ENCODE measurements at regions of chr5 and their contacts with region 1.

Region 1: GRCh38 chr5:122192497-122193496 is 63.5 kb downstream of the ZNF474 start:
- DNase-seq: no peak

Region 2: DNA sequence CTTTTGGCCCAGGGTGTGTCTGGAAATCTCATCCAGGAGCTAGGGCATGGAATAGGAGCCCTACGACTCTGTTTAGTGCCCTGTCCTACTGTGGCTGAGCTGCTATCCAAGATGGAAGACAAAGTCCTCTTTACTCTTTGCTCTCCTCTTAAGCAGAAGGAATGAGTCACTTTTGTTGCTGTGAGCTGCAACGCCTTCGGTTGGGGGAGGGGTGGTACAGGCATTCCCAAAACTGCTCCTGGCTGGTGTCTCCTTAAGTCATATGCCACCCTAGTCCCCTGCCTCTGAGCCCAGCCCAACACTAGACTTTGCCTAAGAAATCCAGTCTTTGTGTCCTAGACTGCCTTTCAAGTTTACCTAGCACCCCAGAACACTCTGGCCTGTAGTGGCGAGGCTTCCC is 1628.8 kb before region 1 on chr5:
- intact Hi-C with region 1: no loop called
- DNase-seq: no peak

Region 3: GRCh38 chr5:122415030-122415800 is 222.4 kb after region 1 on chr5:
- intact Hi-C with region 1: loop called (anchors 5 kb)
- DNase-seq: no peak

Region 4: GRCh38 chr5:122478741-122479413 is 286.1 kb after region 1 on chr5:
- intact Hi-C with region 1: no loop called
- DNase-seq: no peak

Region 5: DNA sequence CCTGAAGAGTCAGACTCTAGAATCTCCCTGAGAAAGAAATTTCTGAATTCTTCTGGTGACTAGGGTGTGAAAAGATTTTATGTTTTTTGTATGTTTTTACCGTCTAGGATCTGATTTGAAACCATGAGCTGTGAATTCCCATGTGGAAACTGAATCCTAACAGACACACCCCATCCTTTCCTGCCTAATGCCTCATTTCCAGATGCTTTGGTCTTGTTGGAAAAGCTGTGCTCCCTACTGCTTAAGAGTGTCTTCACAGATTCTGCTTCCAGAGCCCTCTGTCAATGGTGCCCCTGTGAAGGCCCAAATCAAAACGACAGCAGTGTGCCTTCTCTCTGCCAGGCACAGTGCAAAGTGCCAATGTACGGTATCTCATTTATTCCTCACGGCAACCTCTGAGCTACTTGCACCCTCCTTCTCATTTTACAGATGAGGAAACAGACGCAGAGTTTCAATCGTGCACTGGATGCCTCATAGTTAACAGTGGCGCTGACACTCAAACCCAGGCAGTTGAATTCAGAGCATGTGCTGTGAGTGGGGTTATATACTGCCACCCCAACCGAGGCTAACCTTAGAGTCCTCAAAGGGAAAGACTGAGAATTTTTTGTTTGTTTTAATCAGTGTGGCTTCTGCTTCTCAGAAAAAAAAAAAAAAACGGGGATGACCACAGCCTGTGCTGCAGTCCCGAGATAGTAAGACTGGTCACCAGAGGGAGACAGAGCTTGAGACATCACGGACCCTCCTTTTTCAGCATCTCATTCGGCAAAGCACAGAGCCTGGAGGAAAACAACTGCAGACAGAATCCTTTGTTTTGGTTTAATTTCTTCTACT is 307.7 kb after region 1 on chr5:
- intact Hi-C with region 1: loop called (anchors 5 kb)
- DNase-seq: no peak

Measured in cardiac septum (tissue), 1 donor.